ENCODE measurements at regions of chr14 and their contacts with region 1.

Region 1: GRCh38 chr14:77320238-77320935 is at the start of gene POMT2:
- DNase-seq: peak; percentile 91
- H3K4me3 Mint-ChIP-seq: peak within 1 kb of the TSS; percentile 91
- H3K27ac Mint-ChIP-seq: peak within 1 kb of the TSS; percentile 97
- H3K4me1 Mint-ChIP-seq: peaks cover 15% of the 10 kb centered on the region
- H3K27me3 Mint-ChIP-seq: no peaks in the 10 kb centered on the region
- total RNA-seq, gene POMT2: 11.3 to 14.5 TPM

Region 2: DNA sequence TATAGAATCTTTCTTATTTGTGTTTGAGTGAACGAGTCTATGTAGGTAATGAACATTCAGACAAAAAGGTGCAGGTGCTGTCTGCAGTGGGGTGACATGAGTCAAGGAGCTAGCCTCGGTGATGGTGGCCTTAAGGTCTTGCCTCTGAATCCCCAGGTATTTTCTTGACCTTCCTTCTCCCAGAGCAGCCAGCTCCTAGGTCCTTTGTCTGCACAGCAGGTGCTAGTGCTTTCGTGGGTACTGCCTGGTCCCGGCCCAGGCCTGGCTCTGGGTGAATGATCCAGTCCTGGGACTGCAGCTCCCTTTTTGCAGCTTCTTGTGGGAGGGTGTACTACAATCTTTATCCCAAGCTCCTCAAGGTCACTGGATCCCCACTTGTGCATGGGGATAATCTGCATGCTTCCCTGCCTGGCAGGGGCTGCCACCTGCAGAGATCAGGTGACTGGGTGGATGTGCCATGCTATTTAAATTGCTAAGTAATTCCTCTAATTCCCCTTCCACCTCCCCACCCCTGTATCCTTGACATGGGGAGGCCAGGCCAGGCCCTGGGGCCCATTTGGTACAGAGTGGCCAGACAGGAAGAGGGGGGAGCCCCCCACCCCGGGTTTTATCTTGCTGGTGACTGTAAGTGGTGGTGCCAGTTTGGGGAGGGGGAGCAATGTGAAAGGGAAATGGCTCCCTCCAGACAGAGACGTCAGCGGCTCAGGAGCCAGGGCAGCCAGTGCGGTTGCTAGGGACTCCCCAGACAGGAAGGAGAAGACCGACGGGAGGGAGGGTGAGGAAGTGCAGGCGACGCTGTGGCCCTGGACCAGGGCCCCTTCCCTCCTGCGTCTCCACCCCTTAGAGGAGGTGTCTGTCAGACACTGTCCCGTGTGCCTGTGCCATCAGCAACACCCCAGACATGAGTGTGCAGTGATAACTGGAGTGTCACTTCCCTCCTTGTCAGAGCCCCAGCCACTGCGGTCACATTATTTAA is 552.4 kb before region 1 on chr14:
- CTCF ChIA-PET with region 1: no interaction called
- intact Hi-C with region 1: loop called (anchors 2 kb)
- DNase-seq: peak; percentile 91
- H3K4me3 Mint-ChIP-seq: peak overlapping the region; percentile 1
- H3K27ac Mint-ChIP-seq: peak overlapping the region; percentile 6
- H3K4me1 Mint-ChIP-seq: peaks cover 14% of the 10 kb centered on the region
- H3K27me3 Mint-ChIP-seq: peaks cover 21% of the 10 kb centered on the region

Region 3: DNA sequence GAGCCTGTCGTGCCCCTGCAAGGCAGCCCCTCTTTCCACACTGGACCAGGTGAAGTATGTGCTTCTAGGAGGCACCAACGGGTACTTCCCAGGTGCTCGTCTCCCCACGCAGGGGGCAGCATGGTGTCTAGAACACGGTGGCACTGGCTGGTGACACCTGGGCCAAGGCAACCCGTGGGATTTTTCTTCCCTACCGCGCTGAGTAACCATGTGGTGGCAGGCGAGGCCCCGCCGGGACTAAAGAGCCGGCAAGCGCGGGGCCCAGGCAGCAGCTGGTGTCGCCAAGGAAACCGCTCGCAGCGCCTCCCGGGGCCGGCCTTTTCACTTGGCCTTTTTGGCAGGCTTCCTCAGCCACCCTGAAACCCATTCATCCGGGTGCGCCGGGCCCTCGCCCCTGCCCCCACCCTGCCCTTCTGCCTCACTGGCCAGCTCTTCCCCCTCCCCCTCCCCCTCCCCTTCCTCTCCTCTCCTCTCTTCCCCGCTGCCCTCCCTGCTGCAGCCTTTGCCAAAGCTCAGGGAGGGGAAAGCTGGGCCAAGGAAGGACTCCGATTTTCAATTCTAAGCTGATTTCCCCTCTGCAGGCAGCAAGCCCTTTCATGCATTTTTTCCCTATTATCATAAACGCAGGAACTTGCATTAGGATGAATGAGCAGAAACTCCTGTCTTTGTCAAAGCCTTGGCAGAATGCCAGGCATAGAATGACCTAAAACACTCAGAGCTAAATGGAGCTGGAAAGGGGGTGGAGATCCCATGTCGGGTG is 373.1 kb before region 1 on chr14:
- CTCF ChIA-PET with region 1: no interaction called
- intact Hi-C with region 1: loop called (anchors 1 kb)
- DNase-seq: peak; percentile 93
- H3K4me3 Mint-ChIP-seq: no peak overlapping the region
- H3K27ac Mint-ChIP-seq: peak overlapping the region; percentile 39
- H3K4me1 Mint-ChIP-seq: peaks cover 33% of the 10 kb centered on the region
- H3K27me3 Mint-ChIP-seq: no peaks in the 10 kb centered on the region

Region 4: DNA sequence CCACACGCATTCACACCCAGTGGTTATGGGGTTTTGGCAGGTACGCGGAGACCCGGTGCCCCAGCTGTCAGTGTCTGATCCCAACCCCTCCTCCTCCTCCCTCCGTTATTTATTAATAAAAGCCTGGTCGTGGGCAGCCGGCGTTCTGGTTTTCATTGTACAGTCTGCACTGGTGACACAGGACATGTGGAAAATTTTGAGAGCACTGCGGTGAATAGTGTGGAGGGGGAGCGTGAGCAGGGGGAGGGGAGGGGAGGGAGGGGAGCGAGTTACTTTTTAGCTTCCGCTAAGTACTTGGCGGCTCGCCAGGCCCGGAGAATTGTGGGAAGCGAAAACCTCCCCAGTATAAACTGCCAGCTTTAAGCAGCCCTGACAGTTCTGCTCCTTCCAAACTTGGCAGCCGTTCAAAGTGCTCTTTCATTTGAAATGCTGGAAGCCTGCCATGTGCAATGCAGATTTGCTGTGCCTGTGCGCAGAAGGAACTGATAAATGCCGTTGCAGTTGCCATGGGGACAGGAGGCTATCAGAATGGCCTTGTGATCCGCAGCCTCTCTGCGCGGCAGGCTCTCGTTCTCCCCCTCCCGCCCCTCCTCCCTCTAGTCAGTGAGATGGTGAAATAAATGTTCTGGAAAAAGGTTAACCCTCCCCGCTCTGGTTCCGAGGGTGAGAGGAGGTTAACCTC is 280.2 kb before region 1 on chr14:
- CTCF ChIA-PET with region 1: no interaction called
- intact Hi-C with region 1: loop called (anchors 2 kb)
- DNase-seq: peak; percentile 99
- H3K4me3 Mint-ChIP-seq: peak overlapping the region; percentile 77
- H3K27ac Mint-ChIP-seq: peak overlapping the region; percentile 99
- H3K4me1 Mint-ChIP-seq: peaks cover 88% of the 10 kb centered on the region
- H3K27me3 Mint-ChIP-seq: no peaks in the 10 kb centered on the region

Region 5: DNA sequence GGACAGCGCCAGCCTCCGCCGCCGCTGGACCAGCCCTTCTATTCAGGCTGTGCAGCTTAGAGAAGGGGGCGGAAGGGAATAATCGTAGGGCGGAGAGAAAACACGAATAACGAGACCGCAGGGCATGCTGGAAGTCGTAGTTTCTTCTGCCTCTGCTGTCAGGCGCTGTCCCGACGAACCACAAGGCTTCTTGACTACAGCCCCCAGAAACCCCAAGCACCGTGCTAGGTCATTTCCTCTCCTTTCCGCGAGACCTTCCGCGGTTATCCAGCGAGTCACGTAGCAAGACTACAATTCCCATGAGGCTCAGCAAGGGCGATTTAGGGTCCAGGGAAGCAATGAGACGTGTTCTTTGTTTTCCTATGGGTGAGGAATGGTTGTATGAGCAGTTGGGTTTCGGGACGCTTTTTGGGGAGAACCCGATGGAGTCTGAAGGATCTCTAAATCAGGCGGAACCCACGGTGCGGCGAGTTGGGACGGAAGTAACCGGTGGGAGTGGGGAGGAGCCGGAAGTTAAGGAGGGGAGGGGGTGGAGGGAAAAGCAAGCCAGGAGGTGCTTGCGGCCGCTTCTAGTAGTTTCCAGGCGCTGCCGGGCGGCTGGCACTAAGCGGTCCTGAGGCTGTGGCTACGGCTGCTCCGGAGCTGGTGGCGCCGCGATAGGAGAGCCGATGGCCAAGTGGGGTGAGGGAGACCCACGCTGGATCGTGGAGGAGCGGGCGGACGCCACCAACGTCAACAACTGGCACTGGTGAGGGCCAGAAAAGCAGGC is 137.3 kb after region 1 on chr14 and contains the starts of genes AHSA1 and VIPAS39:
- CTCF ChIA-PET with region 1: interaction called, 3 read pairs
- intact Hi-C with region 1: loop called (anchors 1 kb)
- DNase-seq: peak; percentile 98
- H3K4me3 Mint-ChIP-seq: peak within 1 kb of the TSS; percentile 100
- H3K27ac Mint-ChIP-seq: peak within 1 kb of the TSS; percentile 100
- H3K4me1 Mint-ChIP-seq: peaks cover 32% of the 10 kb centered on the region
- H3K27me3 Mint-ChIP-seq: no peaks in the 10 kb centered on the region
- total RNA-seq, gene AHSA1: 230 to 246 TPM
- total RNA-seq, gene VIPAS39: 12.3 to 13.3 TPM

Region 6: GRCh38 chr14:77641534-77642341 is 321.4 kb after region 1 on chr14:
- CTCF ChIA-PET with region 1: no interaction called
- intact Hi-C with region 1: loop called (anchors 2 kb)
- DNase-seq: peak; percentile 79
- H3K4me3 Mint-ChIP-seq: peak overlapping the region; percentile 84
- H3K27ac Mint-ChIP-seq: peak overlapping the region; percentile 84
- H3K4me1 Mint-ChIP-seq: peaks cover 17% of the 10 kb centered on the region
- H3K27me3 Mint-ChIP-seq: no peaks in the 10 kb centered on the region

Region 7: GRCh38 chr14:77799863-77800730 is 479.7 kb after region 1 on chr14 and contains the start of gene ADCK1:
- CTCF ChIA-PET with region 1: no interaction called
- intact Hi-C with region 1: loop called (anchors 1 kb)
- DNase-seq: peak; percentile 91
- H3K4me3 Mint-ChIP-seq: peak within 1 kb of the TSS; percentile 86
- H3K27ac Mint-ChIP-seq: peak within 1 kb of the TSS; percentile 84
- H3K4me1 Mint-ChIP-seq: peaks cover 12% of the 10 kb centered on the region
- H3K27me3 Mint-ChIP-seq: no peaks in the 10 kb centered on the region
- total RNA-seq, gene ADCK1: 4.2 to 5.1 TPM